Activated naive CD4-positive, alpha-beta T cell treated with anti-CD3 and anti-CD28 coated beads for 36 hours (primary cell): ENCODE measurements at regions of chr22 and their contacts with region 1.

Region 1: GRCh38 chr22:40177738-40178416 is at the start of gene TNRC6B:
- DNase-seq: peak; percentile 88
- H3K4me3 Mint-ChIP-seq: peak within 1 kb of the TSS; percentile 69
- H3K27ac Mint-ChIP-seq: peak within 1 kb of the TSS; percentile 97
- H3K4me1 Mint-ChIP-seq: peaks cover 49% of the 10 kb centered on the region
- H3K27me3 Mint-ChIP-seq: no peaks in the 10 kb centered on the region
- total RNA-seq, gene TNRC6B: 37.9 TPM

Region 2: GRCh38 chr22:39900306-39901227 is 277.3 kb before region 1 on chr22 and contains the start of gene GRAP2:
- CTCF ChIA-PET with region 1: no interaction called
- intact Hi-C with region 1: loop called (anchors 5 kb)
- DNase-seq: peak; percentile 82
- H3K4me3 Mint-ChIP-seq: peak within 1 kb of the TSS; percentile 90
- H3K27ac Mint-ChIP-seq: peak within 1 kb of the TSS; percentile 100
- H3K4me1 Mint-ChIP-seq: peaks cover 18% of the 10 kb centered on the region
- H3K27me3 Mint-ChIP-seq: no peaks in the 10 kb centered on the region
- total RNA-seq, gene GRAP2: 25.5 to 29.4 TPM

Region 3: GRCh38 chr22:40044102-40044869 is 133.6 kb before region 1 on chr22:
- CTCF ChIA-PET with region 1: interaction called, 3 read pairs
- intact Hi-C with region 1: loop called (anchors 1 kb)
- DNase-seq: peak; percentile 99
- H3K4me3 Mint-ChIP-seq: peak overlapping the region; percentile 92
- H3K27ac Mint-ChIP-seq: peak overlapping the region; percentile 99
- H3K4me1 Mint-ChIP-seq: peaks cover 23% of the 10 kb centered on the region
- H3K27me3 Mint-ChIP-seq: no peaks in the 10 kb centered on the region

Region 4: DNA sequence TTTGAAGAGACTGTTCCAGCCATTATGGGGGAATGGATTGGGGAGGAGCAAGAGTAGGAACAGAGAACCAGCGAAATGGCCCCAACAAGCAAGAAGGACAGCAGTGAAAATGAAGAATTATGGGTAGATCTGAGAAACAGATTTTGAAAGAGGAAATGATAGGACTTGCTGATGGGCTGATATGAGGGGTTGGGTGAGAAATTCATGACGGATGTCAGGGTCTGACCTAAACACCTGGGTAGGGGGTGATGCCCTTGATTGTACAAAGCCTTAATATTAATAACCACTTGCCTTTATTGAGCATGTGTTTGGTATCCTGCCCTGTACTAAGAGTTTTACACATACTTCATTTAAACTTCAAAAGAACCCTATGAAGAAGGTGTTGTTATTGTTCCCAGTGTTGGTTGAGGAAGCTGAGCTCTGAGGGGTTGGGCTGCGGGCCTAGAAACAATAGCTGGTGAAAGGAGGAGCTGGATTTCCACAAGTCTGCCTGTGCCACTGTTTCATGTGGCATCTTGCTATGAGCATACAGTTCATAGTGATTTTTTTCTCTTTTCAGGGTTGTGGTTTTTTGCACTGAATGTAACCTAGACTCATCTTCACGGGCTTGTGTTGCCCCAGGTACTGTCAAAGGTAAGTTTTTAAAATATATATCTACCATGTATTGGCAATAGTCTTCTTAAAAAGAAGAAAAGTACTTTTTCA is 61.2 kb before region 1 on chr22:
- CTCF ChIA-PET with region 1: no interaction called
- intact Hi-C with region 1: loop called (anchors 2 kb)
- DNase-seq: peak; percentile 66
- H3K4me3 Mint-ChIP-seq: peak overlapping the region; percentile 28
- H3K27ac Mint-ChIP-seq: peak overlapping the region; percentile 46
- H3K4me1 Mint-ChIP-seq: peaks cover 84% of the 10 kb centered on the region
- H3K27me3 Mint-ChIP-seq: no peaks in the 10 kb centered on the region

Region 5: DNA sequence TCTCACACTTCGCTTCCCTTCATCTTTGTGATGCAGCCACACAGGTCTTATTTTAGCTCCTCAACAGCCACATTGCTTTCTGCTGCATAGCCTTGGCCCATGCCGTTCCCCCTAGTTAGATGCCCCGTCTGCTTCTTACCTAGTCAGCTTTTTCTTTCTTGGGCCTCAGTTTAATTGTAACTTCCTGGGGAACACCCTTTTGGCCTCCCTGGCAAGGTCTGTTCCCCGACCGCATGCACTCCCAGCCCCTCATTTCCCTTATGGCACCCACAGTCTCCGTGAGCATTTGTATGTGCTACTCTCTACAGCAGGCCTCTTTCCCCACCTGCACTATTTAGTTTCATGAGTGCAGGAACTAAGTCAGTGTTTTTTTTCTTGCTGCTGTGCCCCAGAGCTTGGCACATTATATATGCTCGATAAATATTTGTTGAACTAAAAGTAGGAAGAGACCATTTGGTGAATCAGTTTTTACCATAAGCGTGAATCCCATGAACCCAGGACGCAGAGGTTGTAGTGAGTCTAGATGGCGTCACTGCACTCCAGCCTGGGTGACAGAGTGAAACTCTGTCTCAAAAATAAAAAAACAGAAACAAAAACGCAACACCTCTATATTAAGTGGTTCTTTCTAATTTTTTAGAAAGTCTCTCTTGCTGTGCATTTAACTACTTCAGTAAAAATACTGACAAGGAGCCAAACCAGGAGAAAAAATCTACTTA is 38.3 kb after region 1 on chr22:
- CTCF ChIA-PET with region 1: interaction called, 3 read pairs
- intact Hi-C with region 1: loop called (anchors 1 kb)
- DNase-seq: peak; percentile 63
- H3K4me3 Mint-ChIP-seq: peak overlapping the region; percentile 60
- H3K27ac Mint-ChIP-seq: peak overlapping the region; percentile 86
- H3K4me1 Mint-ChIP-seq: peaks cover 85% of the 10 kb centered on the region
- H3K27me3 Mint-ChIP-seq: no peaks in the 10 kb centered on the region

Region 6: GRCh38 chr22:40243891-40244290 is 66.0 kb after region 1 on chr22:
- CTCF ChIA-PET with region 1: no interaction called
- intact Hi-C with region 1: loop called (anchors 2 kb)
- DNase-seq: peak; percentile 23
- H3K4me3 Mint-ChIP-seq: no peak overlapping the region
- H3K27ac Mint-ChIP-seq: peak overlapping the region; percentile 26
- H3K4me1 Mint-ChIP-seq: peaks cover 74% of the 10 kb centered on the region
- H3K27me3 Mint-ChIP-seq: no peaks in the 10 kb centered on the region

Region 7: GRCh38 chr22:40326905-40327735 is 149.2 kb after region 1 on chr22:
- CTCF ChIA-PET with region 1: interaction called, 3 read pairs
- intact Hi-C with region 1: loop called (anchors 2 kb)
- DNase-seq: no peak
- H3K4me3 Mint-ChIP-seq: peak overlapping the region; percentile 2
- H3K27ac Mint-ChIP-seq: peak overlapping the region; percentile 68
- H3K4me1 Mint-ChIP-seq: peaks cover 83% of the 10 kb centered on the region
- H3K27me3 Mint-ChIP-seq: no peaks in the 10 kb centered on the region

Region 8: GRCh38 chr22:40463017-40463631 is 285.2 kb after region 1 on chr22:
- CTCF ChIA-PET with region 1: no interaction called
- intact Hi-C with region 1: no loop called
- DNase-seq: peak; percentile 66
- H3K4me3 Mint-ChIP-seq: peak overlapping the region; percentile 97
- H3K27ac Mint-ChIP-seq: peak overlapping the region; percentile 97
- H3K4me1 Mint-ChIP-seq: peaks cover 68% of the 10 kb centered on the region
- H3K27me3 Mint-ChIP-seq: no peaks in the 10 kb centered on the region

Region 9: DNA sequence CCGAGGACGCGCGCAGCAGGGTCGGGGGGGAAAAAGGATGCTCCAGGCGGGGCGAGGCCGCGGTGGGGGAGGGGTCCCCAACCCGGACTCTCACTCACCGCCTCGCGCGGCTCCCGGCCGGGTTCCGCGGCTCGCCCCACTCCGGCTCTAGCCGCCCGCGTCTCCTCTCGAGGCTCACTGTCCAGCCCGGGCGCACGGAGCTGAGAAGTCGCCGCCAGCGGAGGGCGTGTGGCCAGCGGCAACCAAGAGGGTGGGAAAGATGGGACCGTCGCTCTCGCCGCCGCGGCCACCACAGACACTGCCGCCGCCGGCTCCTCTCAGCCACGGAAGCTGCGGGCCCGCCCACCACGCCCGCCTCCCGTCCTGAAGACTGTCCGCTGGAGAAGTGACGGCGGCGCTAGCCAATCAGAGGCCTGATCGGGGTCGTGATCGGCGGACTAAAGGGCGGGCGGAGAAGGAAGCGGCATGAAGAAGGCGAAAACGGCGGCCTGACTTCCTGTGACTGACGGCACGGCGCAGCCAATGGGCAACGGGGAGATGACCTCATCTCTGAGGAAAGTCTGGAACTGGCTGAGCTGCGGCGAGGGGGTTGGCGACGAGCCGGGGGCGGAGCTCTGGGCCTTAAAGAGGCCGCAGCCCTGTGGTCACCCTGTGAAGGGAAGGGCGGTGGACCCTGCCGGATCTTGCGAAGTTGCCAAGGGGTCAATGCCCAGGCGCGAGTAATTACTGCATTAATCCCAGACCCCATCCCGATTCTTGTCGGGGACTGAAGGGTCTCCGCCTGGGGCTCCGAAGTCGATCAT is 458.7 kb after region 1 on chr22 and contains the start of gene MRTFA:
- CTCF ChIA-PET with region 1: no interaction called
- intact Hi-C with region 1: no loop called
- DNase-seq: peak; percentile 100
- H3K4me3 Mint-ChIP-seq: peak within 1 kb of the TSS; percentile 87
- H3K27ac Mint-ChIP-seq: peak within 1 kb of the TSS; percentile 92
- H3K4me1 Mint-ChIP-seq: peaks cover 39% of the 10 kb centered on the region
- H3K27me3 Mint-ChIP-seq: no peaks in the 10 kb centered on the region
- total RNA-seq, gene MRTFA: 47.2 to 48.9 TPM